ENCODE measurements at regions of chr7 and their contacts with region 1.

Region 1: DNA sequence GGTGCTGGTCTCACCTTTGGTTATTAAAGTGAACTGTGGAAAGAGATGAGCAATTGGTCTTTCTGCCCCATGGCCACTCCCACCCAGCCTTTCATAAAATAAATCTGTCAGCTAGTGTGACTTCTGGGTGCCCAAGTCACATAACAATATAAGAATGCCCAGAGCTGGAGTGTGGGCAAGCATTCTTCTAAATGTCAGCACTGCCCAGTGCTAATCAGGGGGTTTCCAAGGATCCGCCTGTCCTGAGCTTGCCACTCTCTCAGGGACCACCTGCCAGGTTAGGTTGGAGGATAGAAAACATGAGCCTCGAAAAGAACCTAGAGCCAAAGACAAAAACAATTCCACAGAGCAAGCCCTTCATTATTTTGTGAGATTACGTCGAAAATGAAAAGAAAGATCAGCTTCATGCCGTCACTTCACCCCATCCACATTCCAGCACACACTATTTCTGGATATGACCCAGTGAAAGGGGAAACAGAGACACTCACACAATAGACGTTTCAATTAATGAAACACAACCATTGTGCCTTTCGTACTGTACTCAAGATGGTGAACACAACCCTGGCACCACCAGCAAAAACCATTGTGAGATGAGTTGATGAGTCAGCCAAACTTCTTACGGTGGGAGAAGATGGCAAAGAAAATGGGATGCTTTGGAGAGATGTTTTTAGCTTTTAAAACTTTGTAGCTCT is 30.8 kb downstream of the SCRN1 start:
- DNase-seq: no peak
- ATAC-seq: peak; percentile 67

Region 2: DNA sequence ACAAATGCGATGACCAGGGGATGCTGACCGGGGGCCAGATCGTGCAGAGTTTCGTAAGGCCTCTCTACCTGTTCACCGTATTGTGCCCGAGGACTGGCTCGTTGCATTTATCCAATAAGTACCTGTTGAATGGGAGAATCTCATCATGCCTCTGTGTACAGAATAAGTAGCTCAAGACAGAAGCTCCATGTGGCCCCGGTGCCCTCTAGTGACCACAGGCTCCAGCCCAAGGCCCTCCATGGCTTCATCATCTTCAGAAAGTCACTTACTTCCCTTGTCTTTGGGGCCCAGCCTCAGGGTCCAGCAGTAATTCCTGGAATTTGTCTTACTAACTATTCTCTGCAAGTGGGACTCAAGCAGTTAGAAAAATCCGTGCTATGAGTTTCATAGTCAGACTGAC is 613.2 kb before region 1 on chr7:
- intact Hi-C with region 1: no loop called
- DNase-seq: no peak
- ATAC-seq: peak; percentile 65

Region 3: DNA sequence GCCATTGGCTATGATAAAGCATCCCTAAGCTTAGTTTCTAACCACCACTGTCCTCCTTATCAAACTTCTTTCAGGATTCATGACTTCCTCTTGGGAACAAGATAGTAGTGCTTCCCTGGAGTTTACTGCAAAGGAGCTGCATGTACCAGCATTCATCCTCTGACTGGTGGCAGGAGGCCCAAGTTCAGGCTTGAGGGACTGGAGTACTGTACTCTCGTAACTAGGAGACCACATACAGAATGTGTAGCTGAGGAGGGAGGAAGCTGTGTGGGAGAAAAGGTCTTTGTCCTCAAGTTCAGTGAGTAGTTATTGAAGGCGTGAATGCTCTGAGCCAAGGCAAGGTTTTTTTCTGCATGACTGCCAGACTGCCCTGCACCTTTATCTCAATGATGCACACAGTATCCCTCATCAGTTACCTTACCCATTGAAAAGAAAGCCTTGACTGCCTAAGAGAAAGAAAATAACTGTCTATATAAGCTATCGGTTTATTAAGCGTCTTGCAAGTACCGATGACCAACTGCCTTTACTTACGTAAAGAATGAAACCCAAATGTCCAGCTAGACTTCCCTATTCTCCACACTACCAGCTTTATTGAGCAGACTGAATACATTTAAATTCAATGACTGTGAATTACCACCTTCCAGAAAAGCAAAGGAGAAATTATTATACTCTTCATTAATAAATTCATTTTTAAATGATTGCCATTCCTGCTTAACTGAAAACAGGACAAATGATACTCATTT is 18.0 kb after region 1 on chr7:
- intact Hi-C with region 1: loop called (anchors 1 kb)
- DNase-seq: no peak
- ATAC-seq: peak; percentile 79

Region 4: GRCh38 chr7:30504347-30505173 is 545.7 kb after region 1 on chr7 and contains the start of gene GGCT:
- intact Hi-C with region 1: no loop called
- DNase-seq: peak; percentile 99
- ATAC-seq: peak; percentile 99
- total RNA-seq, gene GGCT: 21.4 TPM

Measured in sciatic nerve (tissue), 2 donors.